RWPE1 (cell line): ENCODE measurements at regions of chr2 and their contacts with region 1.

Region 1: DNA sequence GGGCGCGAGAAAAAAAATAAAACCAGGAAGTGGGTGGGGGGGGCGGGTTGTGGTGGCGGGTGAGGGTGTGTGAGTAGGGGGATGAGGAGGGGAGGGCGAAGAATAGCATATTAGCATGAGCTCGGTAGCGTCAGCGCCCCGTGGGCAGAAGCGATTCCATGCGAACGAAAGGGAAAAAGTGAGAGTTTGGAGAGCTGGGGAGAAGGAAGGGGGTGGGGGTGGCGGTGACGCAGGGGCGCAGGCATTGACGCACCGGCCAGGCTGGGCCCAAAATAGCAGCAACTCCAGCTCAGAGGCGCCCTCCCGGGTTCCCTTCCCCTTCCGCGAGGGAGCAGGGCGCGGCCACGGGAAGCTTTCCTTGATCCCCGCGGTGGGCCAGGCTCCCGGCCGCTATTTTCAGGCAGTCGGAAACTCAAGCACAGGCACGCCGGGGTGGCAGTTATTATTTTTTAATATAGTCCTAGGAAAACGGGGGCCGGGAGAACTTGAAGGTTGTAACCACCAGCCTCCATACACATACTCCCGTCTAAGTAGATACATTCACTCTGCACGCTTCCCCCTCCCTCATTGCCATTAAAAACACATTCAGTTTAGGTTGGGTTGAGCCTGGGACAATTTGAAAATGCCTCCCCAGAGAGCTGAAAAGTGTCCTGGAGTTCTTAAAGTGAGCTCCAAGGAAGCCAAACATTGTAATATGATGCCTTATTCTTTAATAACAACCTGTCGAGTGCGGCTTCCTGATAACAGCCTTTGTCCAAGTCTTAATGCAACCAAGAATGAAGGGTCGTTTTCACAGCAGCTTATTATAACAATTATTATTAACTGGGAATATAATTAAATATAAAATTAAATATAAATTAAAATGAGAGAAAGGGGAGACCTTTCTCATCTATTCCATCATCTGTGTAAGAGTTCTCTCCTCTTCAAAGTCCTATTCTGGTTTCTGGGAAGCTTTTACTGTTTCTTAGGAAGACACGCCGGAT is 2.3 kb upstream of the NR4A2 start:
- DNase-seq: peak; percentile 87
- H3K27ac ChIP-seq: peak overlapping the region; percentile 97
- CTCF ChIP-seq: no peak

Region 2: GRCh38 chr2:156182141-156182540 is 152.6 kb before region 1 on chr2:
- CTCF ChIA-PET with region 1: no interaction called
- POLR2A ChIA-PET with region 1: interaction called, 10 read pairs
- DNase-seq: peak; percentile 82
- H3K27ac ChIP-seq: no peak overlapping the region
- CTCF ChIP-seq: no peak

Region 3: DNA sequence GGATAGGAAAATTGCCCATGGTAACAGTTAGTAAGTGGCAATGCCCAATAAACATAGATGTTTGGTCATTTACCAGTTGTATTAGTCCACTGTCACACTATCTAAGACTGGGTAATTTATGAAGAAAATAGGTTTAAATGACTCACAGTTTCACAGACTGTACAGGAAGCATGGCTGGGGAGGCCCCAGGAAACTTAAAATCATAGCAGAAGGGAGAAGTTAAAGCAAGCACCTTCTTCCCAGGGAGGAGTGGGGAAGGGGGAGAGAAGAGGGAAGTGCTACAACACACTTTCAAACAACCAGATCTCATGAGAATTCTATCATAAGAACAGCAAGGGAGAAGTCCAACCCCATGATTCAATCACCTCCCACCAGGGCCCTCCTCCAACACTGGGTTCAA is 25.6 kb before region 1 on chr2:
- CTCF ChIA-PET with region 1: no interaction called
- POLR2A ChIA-PET with region 1: no interaction called
- DNase-seq: no peak
- H3K27ac ChIP-seq: no peak overlapping the region
- CTCF ChIP-seq: no peak

Region 4: GRCh38 chr2:156319811-156320485 is 14.8 kb before region 1 on chr2:
- CTCF ChIA-PET with region 1: no interaction called
- POLR2A ChIA-PET with region 1: no interaction called
- DNase-seq: no peak
- H3K27ac ChIP-seq: no peak overlapping the region
- CTCF ChIP-seq: no peak

Region 5: DNA sequence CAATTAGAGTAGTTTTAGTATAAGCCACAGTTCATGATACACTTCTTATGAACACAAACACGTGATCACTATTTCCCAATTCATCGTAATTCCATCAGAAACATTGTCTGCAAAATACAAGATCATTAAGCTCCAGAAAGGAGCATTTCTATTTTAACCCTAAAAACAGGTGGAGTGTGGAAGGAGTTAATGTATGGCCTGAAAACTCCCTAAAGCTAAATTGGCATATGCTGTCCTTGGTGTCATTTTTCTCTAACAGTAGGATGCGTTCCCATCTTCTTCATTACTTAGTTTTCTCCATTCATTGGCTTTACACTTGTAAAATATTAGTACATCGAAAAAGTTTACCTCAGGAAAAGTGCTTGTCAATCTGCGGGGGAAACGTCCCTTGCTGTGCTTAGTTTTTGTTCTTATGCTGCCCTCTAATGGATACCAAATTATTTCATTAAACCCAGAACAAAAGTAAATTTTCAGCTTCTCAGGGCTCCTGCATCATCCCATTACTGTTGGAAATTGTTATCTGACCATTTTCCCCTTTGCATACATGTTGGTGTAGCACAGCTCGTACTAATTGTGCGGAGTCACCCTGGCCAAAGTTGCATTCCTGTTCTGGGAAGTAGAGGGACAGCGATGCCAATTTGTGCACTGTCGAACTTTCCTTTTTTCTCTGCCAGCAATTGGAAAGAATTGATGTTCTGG is 254.7 kb after region 1 on chr2:
- CTCF ChIA-PET with region 1: interaction called, 11 read pairs
- POLR2A ChIA-PET with region 1: no interaction called
- DNase-seq: peak; percentile 42
- H3K27ac ChIP-seq: no peak overlapping the region
- CTCF ChIP-seq: peak; percentile 51